ENCODE measurements at regions of chr10 and their contacts with region 1.

Region 1: DNA sequence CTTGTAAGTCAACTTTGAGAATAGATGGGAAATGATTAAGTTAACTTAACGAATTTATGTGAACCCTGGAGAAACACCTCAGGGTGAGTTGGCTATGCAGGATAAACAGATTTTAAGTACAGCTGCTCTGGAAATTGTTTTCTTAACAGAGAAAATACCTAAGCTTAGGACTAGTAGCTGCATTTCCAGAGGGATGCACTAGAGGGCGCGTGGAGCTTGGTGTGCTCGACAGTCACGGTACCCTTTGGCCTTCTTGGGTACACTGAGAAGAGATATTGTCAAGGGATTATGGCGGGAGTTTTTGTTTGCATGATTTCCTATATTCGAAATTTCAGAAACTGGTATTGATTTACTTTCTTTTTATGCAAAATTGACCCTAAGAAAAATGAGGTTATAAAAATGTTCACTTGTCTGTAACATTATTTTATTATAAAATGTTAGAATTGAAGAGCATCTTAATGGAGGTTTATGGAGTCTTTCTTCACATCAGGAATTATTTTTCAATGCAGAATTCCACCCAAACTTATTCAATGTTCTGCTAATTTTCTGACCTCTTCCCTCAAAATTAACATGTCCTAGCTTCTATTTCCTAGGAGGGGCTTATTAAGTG is 58.4 kb upstream of the MYO3A start:
- DNase-seq: peak; percentile 66
- ATAC-seq: peak; percentile 79 to 84
- H3K4me3 ChIP-seq: no peak overlapping the region
- H3K27ac ChIP-seq: no peak overlapping the region
- H3K4me1 ChIP-seq: no peaks in the 10 kb centered on the region
- H3K27me3 ChIP-seq: no peaks in the 10 kb centered on the region
- CTCF ChIP-seq: peak; percentile 83

Region 2: DNA sequence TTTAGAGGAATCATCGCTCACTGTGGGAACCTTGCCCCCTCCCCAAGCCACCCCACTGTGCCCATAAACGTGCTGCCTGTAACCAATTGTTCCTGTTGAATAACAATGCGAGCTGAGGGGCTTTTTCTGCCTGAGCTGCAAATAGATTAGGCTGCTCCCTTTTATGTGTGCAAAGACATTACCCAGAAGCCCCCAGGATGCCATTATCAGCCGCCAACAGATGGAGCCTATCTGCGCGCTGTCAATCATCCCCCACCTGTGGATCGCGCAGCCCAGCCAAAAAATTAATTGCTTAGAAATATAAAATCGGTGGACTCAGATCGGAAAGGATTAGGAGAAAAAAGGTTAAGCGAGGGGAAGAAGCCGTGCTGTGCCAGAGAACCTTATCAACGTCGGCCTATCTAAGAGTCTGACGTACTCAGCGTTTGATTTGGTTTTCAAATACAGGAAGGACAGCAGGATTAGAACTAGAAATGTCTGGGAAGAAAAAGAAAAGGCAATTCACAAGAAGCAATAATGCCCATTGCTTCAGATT is 108.9 kb before region 1 on chr10:
- intact Hi-C with region 1: no loop called
- DNase-seq: no peak
- ATAC-seq: no peak
- H3K4me3 ChIP-seq: no peak overlapping the region
- H3K27ac ChIP-seq: no peak overlapping the region
- H3K4me1 ChIP-seq: no peaks in the 10 kb centered on the region
- H3K27me3 ChIP-seq: peaks cover 5% of the 10 kb centered on the region
- CTCF ChIP-seq: no peak

Region 3: DNA sequence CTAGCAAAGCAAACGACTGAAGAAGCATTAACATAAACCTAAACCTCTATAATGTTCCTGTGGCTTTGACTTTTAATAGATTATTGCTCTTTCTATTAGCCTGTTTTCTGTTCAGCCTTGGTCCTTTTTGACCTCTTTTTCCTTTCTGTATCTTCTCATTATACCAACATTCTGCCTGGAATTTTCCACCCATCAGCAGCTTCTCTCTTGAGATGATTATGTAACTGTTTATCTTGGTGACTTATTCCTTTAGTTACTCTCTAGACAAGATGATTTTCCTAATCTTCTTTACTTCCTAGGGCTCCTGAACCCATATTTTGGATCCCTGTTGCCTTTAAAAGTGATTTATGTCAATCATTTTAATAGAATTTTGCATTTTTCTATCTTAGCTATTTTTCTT is 139.4 kb after region 1 on chr10:
- intact Hi-C with region 1: no loop called
- DNase-seq: no peak
- ATAC-seq: no peak
- H3K4me3 ChIP-seq: no peak overlapping the region
- H3K27ac ChIP-seq: no peak overlapping the region
- H3K4me1 ChIP-seq: no peaks in the 10 kb centered on the region
- H3K27me3 ChIP-seq: no peaks in the 10 kb centered on the region
- CTCF ChIP-seq: no peak

Region 4: DNA sequence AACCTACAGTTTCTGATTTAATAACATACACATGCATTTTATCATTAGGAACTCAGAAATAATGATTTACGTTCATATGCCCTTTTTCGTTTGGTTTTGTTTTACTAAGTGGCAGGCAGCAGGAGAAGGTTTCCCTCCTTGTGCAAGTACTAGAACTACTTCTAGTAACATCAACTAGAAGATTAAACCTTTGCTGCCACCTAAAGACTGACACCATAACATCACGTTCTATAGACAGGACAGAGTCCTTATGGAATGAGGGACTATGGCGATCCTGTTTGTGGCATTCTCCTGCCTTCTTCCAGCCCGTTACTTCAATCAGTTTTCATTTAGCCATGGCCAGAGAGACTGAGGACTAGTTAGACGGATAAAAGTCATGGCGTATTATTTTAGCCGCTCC is 394.1 kb after region 1 on chr10:
- intact Hi-C with region 1: loop called (anchors 5 kb)
- DNase-seq: no peak
- ATAC-seq: peak in 1 of 2 donors; percentile 33
- H3K4me3 ChIP-seq: no peak overlapping the region
- H3K27ac ChIP-seq: no peak overlapping the region
- H3K4me1 ChIP-seq: no peaks in the 10 kb centered on the region
- H3K27me3 ChIP-seq: no peaks in the 10 kb centered on the region
- CTCF ChIP-seq: peak; percentile 17